Heart left ventricle (tissue), 16 donors: ENCODE measurements at regions of chr7 and their contacts with region 1.

Region 1: GRCh38 chr7:113698556-113699220 is 220.1 kb downstream of the PPP1R3A start:
- DNase-seq: no peak
- ATAC-seq: no peak
- H3K4me3 ChIP-seq: no peak overlapping the region
- H3K27ac ChIP-seq: no peak overlapping the region
- H3K4me1 ChIP-seq: no peaks in the 10 kb centered on the region
- H3K27me3 ChIP-seq: no peaks in the 10 kb centered on the region
- CTCF ChIP-seq: peak; percentile 45 to 71 (median 62)
- POLR2A ChIP-seq: no peak

Region 2: GRCh38 chr7:113404245-113404644 is 294.4 kb before region 1 on chr7:
- intact Hi-C with region 1: loop called in 9 of 10 experiments (anchors 2 to 10 kb)
- DNase-seq: no peak
- ATAC-seq: peak in 2 of 4 donors; percentile 46 to 57
- H3K4me3 ChIP-seq: no peak overlapping the region
- H3K27ac ChIP-seq: no peak overlapping the region
- H3K4me1 ChIP-seq: no peaks in the 10 kb centered on the region
- H3K27me3 ChIP-seq: no peaks in the 10 kb centered on the region
- CTCF ChIP-seq: peak in 8 of 12 donors; percentile 3 to 38 (median 26)
- POLR2A ChIP-seq: no peak

Region 3: DNA sequence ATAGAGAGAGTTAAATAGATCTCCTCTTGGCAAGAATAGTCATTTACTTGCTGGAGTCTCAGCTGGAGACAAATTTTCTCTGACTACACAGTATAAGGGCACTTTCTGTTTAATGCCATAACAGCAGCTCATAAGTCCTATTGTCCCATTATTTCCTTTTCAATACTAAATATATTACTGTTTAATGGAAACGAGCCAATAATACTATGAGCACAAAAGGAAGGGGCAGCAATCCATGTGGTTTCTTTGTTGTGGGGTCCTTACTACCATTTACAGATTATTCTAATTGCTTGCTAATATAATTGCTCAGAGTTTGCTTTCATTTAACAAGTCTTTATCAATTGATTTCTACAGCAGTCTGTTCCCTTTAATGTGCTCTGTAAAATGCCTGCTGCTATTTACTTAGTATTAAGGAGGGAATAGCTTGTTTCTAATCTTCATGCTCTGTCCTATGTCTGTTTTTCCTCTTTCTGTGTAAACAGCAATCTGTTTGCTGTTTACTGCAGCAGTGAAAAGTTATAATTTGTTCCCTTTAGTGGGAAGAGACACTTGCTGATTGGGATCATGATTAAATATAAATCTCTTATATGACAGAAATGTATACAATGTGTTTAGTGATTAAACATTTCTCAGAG is 284.2 kb before region 1 on chr7:
- intact Hi-C with region 1: loop called in 5 of 10 experiments (anchors 10 kb)
- DNase-seq: no peak
- ATAC-seq: no peak
- H3K4me3 ChIP-seq: no peak overlapping the region
- H3K27ac ChIP-seq: no peak overlapping the region
- H3K4me1 ChIP-seq: no peaks in the 10 kb centered on the region
- H3K27me3 ChIP-seq: no peaks in the 10 kb centered on the region
- CTCF ChIP-seq: no peak
- POLR2A ChIP-seq: no peak

Region 4: DNA sequence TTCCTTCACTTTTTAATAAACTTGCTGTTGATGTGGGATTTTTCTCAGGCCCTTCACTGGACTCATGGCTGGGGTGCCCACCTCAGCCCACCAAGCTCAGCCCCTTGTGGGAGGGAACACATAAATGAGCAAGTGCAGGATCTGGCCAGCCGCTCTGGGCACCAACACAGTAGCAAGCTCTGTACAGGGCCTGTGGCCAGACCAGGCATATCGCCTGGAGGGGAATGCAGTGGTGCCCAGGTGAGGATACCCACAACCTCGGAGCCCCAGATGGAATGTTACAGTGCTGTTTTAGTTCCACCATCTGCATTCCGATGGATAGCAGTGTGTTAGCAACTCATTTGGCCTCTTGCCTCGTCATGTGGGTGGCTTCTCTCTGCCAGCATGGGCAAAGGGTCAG is 14.5 kb before region 1 on chr7:
- intact Hi-C with region 1: no loop called
- DNase-seq: no peak
- ATAC-seq: peak in 1 of 4 donors; percentile 15
- H3K4me3 ChIP-seq: no peak overlapping the region
- H3K27ac ChIP-seq: no peak overlapping the region
- H3K4me1 ChIP-seq: no peaks in the 10 kb centered on the region
- H3K27me3 ChIP-seq: no peaks in the 10 kb centered on the region
- CTCF ChIP-seq: no peak
- POLR2A ChIP-seq: no peak

Region 5: GRCh38 chr7:113764401-113765035 is 65.8 kb after region 1 on chr7:
- intact Hi-C with region 1: no loop called
- DNase-seq: no peak
- ATAC-seq: no peak
- H3K4me3 ChIP-seq: no peak overlapping the region
- H3K27ac ChIP-seq: no peak overlapping the region
- H3K4me1 ChIP-seq: peaks cover 0 to 8% (median 0%) of the 10 kb centered on the region in 12 donors
- H3K27me3 ChIP-seq: no peaks in the 10 kb centered on the region
- CTCF ChIP-seq: no peak
- POLR2A ChIP-seq: no peak